Calu3 (cell line): ENCODE measurements at regions of chr22 and their contacts with region 1.

Region 1: GRCh38 chr22:23857606-23858483 is at the start of gene SLC2A11:
- DNase-seq: peak; percentile 94
- H3K4me3 Mint-ChIP-seq: peak within 1 kb of the TSS; percentile 95
- H3K27ac Mint-ChIP-seq: peak within 1 kb of the TSS; percentile 74
- H3K4me1 Mint-ChIP-seq: peaks cover 21% of the 10 kb centered on the region
- H3K27me3 Mint-ChIP-seq: no peaks in the 10 kb centered on the region
- CTCF ChIP-seq: peak; percentile 10
- total RNA-seq, gene SLC2A11: 18.9 and 32.8 TPM in 2 replicates

Region 2: GRCh38 chr22:23893943-23894709 is 36.3 kb after region 1 on chr22 and contains the start of gene MIF:
- CTCF ChIA-PET with region 1: interaction called, 17 read pairs
- intact Hi-C with region 1: no loop called
- DNase-seq: peak; percentile 99
- H3K4me3 Mint-ChIP-seq: peak within 1 kb of the TSS; percentile 92
- H3K27ac Mint-ChIP-seq: peak within 1 kb of the TSS; percentile 98
- H3K4me1 Mint-ChIP-seq: peaks cover 24% of the 10 kb centered on the region
- H3K27me3 Mint-ChIP-seq: no peaks in the 10 kb centered on the region
- CTCF ChIP-seq: peak; percentile 82
- total RNA-seq, gene MIF: 669 and 679 TPM in 2 replicates